Brain microvascular endothelial cell (primary cell): ENCODE measurements at regions of chr6 and their contacts with region 1.

Region 1: GRCh38 chr6:52284460-52285176 is at the start of gene MCM3:
- DNase-seq: peak; percentile 99
- H3K4me3 ChIP-seq: peak within 1 kb of the TSS; percentile 82
- H3K27ac ChIP-seq: peak within 1 kb of the TSS; percentile 30
- H3K27me3 ChIP-seq: no peaks in the 10 kb centered on the region
- CTCF ChIP-seq: no peak

Region 2: GRCh38 chr6:51901766-51902764 is 382.6 kb before region 1 on chr6:
- in situ Hi-C with region 1: no loop called
- DNase-seq: no peak
- H3K4me3 ChIP-seq: no peak overlapping the region
- H3K27ac ChIP-seq: no peak overlapping the region
- H3K27me3 ChIP-seq: no peaks in the 10 kb centered on the region
- CTCF ChIP-seq: no peak

Region 3: GRCh38 chr6:52049252-52050050 is 235.2 kb before region 1 on chr6:
- in situ Hi-C with region 1: no loop called
- DNase-seq: peak; percentile 3
- H3K4me3 ChIP-seq: no peak overlapping the region
- H3K27ac ChIP-seq: no peak overlapping the region
- H3K27me3 ChIP-seq: no peaks in the 10 kb centered on the region
- CTCF ChIP-seq: peak; percentile 62

Region 4: DNA sequence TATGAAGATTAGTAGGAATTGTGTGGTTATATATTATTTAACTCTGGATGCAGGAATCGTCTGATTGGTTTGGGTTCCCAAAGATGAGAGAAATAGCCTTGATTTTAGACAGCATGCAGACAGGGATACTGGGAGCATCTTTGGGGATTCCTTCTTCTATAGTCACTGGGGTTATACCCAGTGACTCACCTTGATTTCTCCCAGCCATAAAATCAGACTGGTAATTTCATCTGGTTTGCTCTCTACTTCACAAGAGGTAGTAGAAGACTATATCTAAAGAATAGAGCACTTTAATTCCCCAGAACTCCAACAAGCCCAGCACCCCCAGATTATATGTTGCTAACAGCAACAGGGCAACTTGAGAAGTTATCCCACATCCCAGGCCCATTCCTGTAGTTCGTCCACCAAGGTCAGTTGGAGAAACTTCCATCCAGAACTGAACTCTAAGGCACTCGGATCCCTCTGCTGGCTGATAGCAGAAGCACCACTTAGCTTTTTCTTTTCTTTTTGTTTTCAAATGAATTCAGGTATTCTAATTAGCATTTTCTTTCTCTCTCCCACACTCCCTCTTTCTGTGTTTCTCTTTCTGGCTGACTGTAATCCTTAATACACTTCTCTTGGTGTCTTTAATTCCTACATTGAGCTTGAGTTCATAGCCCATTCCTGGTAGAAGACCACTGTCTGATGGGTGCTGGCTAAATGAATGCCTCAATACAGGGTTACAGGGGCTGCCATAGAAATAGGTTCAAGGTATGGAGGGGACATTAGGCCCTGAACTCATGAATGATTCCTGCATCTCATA is 115.1 kb after region 1 on chr6:
- in situ Hi-C with region 1: loop called (anchors 25 kb)
- DNase-seq: peak; percentile 49
- H3K4me3 ChIP-seq: no peak overlapping the region
- H3K27ac ChIP-seq: no peak overlapping the region
- H3K27me3 ChIP-seq: no peaks in the 10 kb centered on the region
- CTCF ChIP-seq: peak; percentile 94

Region 5: DNA sequence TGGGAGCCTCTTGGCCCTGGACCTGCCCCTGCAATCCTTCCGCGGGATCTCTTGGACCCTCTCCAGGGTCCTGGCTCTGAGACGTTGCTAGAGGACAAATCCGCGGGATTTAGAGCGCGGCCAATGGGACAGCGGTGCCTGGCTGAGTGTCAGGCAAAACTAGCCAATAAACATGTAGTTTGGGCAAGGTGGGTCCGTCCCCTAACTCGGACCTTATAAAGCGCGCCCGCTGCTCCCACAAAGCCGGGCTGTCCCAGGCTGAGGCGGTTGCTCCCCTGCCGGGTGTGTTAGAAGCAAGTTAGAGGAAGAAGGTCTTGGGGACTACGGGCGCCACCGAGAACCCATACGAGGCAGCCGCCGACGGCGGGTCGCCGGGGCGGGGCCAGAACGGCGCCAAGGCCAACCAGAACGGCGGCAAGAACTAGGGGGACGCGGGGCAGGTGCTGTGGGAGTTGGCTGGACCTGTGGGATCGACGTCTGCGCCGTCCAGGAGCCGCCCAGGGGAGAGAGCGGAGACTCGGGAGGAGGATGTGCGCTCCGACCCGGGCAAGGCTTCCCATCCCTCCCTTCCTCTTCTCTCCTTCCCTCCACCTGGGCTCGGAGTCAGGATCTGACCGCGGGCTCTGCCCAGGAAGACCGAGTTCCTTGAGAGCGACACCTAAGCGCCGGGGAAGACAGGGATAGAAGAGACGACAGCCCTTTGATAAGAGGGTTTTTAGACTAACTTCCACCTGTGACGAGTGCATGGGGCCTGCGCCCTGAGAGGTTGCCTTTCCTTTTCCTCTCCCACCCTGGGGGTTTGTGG is 379.8 kb after region 1 on chr6:
- in situ Hi-C with region 1: loop called (anchors 25 kb)
- DNase-seq: peak; percentile 95
- H3K4me3 ChIP-seq: peak overlapping the region; percentile 73
- H3K27ac ChIP-seq: peak overlapping the region; percentile 31
- H3K27me3 ChIP-seq: no peaks in the 10 kb centered on the region
- CTCF ChIP-seq: no peak